Activated CD4-positive, alpha-beta T cell treated with anti-CD3 and anti-CD28 coated beads for 36 hours (primary cell): ENCODE measurements at regions of chr18 and their contacts with region 1.

Region 1: GRCh38 chr18:8849696-8850095 is 144.3 kb downstream of the MTCL1 start:
- DNase-seq: no peak
- ATAC-seq: no peak
- H3K4me3 Mint-ChIP-seq: no peak overlapping the region
- H3K27ac Mint-ChIP-seq: no peak overlapping the region
- H3K4me1 Mint-ChIP-seq: no peaks in the 10 kb centered on the region
- H3K27me3 Mint-ChIP-seq: peaks cover 6% of the 10 kb centered on the region

Region 2: DNA sequence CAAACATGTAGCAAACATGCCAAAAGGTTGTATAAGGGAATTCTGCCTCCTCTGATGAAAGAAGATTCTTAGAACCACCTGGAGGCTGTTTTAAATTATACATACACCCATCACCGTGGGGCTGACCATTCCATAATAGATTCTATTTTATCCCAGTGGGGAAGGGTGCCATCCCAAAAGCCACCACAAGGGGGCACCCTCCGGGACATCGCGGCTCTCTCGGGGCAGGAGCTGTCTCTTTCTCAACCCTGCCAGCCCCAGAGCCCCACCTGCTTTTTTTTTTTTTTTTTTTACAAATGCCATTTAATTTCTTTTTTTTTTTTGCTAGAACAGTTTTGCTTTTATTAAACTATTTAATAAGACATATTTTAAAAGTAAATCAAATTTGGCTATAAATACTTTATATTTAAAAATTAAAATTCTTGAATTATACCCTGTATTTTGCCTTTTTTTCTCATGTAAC is 152.9 kb before region 1 on chr18:
- CTCF ChIA-PET with region 1: no interaction called
- POLR2A ChIA-PET with region 1: no interaction called
- intact Hi-C with region 1: no loop called
- DNase-seq: peak; percentile 84
- ATAC-seq: peak; percentile 89
- H3K4me3 Mint-ChIP-seq: no peak overlapping the region
- H3K27ac Mint-ChIP-seq: no peak overlapping the region
- H3K4me1 Mint-ChIP-seq: no peaks in the 10 kb centered on the region
- H3K27me3 Mint-ChIP-seq: peaks cover 13% of the 10 kb centered on the region

Region 3: GRCh38 chr18:8800449-8800848 is 49.2 kb before region 1 on chr18:
- CTCF ChIA-PET with region 1: no interaction called
- POLR2A ChIA-PET with region 1: no interaction called
- intact Hi-C with region 1: loop called in 1 of 2 experiments (anchors 5 kb)
- DNase-seq: no peak
- ATAC-seq: no peak
- H3K4me3 Mint-ChIP-seq: no peak overlapping the region
- H3K27ac Mint-ChIP-seq: no peak overlapping the region
- H3K4me1 Mint-ChIP-seq: peaks cover 4% of the 10 kb centered on the region
- H3K27me3 Mint-ChIP-seq: peaks cover 3% of the 10 kb centered on the region

Region 4: GRCh38 chr18:8870528-8870927 is 20.8 kb after region 1 on chr18:
- CTCF ChIA-PET with region 1: no interaction called
- POLR2A ChIA-PET with region 1: no interaction called
- intact Hi-C with region 1: loop called in 1 of 2 experiments (anchors 2 kb)
- DNase-seq: no peak
- ATAC-seq: no peak
- H3K4me3 Mint-ChIP-seq: no peak overlapping the region
- H3K27ac Mint-ChIP-seq: no peak overlapping the region
- H3K4me1 Mint-ChIP-seq: no peaks in the 10 kb centered on the region
- H3K27me3 Mint-ChIP-seq: peaks cover 2% of the 10 kb centered on the region